Activated CD4-positive, alpha-beta T cell treated with anti-CD3 and anti-CD28 coated beads for 36 hours (primary cell): ENCODE measurements at regions of chr18 and their contacts with region 1.

Region 1: DNA sequence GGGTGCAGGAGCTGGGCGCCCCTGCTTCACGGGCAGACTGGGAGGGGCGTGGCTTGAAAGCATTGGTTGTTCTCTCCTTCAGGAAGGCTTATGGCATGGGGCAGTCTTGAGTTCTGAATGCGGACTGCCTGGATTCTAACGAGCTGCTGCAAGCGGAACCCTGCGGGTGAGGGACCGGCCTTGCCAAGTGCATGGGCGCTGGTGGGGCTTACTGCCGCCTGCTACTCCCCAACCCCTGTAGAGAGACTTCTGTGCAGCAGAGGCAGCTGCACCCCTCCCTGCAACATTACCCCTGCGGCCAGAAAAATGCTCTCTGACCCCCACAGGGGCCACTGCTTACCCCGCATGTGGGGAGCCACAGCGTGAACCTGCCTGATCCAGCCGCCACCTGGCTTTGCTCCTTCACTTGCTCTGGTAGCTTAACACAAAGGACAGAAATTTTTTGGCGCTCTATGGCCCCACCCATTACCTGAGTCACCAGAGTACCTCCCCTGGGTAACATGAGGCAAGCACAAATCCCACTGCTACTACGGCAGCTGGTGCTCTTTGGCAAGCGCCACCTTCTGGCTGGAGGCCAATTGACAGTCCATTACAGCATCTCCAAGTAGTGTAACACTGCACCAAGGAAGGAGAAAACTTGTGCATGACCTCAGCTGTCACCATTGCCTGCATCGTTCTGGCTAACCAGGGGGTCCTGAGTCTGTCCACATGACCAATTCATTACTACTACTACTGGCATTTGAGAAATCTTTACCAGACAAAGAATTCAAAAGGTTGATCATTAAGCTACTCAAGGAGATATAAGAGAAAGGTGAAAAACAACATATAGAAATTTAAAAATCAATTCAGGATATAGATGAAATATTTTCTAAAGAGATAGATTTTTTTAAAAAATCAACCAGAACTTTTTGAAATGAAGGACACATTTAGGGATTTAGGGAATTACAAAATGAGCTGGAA is 35.4 kb downstream of the MYL12B start:
- DNase-seq: peak; percentile 97
- ATAC-seq: peak; percentile 97
- H3K4me3 Mint-ChIP-seq: peak overlapping the region; percentile 87
- H3K27ac Mint-ChIP-seq: peak overlapping the region; percentile 78
- H3K4me1 Mint-ChIP-seq: peaks cover 2% of the 10 kb centered on the region
- H3K27me3 Mint-ChIP-seq: peaks cover 22% of the 10 kb centered on the region

Region 2: GRCh38 chr18:3261371-3262246 is 35.7 kb before region 1 on chr18 and contains the start of gene MYL12B:
- CTCF ChIA-PET with region 1: interaction called, 6 read pairs
- POLR2A ChIA-PET with region 1: interaction called, 5 read pairs
- intact Hi-C with region 1: loop called (anchors 1 to 2 kb)
- DNase-seq: peak; percentile 88
- ATAC-seq: peak; percentile 77
- H3K4me3 Mint-ChIP-seq: peak within 1 kb of the TSS; percentile 88
- H3K27ac Mint-ChIP-seq: peak within 1 kb of the TSS; percentile 96
- H3K4me1 Mint-ChIP-seq: peaks cover 59% of the 10 kb centered on the region
- H3K27me3 Mint-ChIP-seq: no peaks in the 10 kb centered on the region
- total RNA-seq, gene MYL12B: 282 to 301 TPM

Region 3: GRCh38 chr18:3269241-3269913 is 27.9 kb before region 1 on chr18:
- CTCF ChIA-PET with region 1: interaction called, 11 read pairs
- POLR2A ChIA-PET with region 1: no interaction called
- intact Hi-C with region 1: no loop called
- DNase-seq: no peak
- ATAC-seq: no peak
- H3K4me3 Mint-ChIP-seq: no peak overlapping the region
- H3K27ac Mint-ChIP-seq: peak overlapping the region; percentile 77
- H3K4me1 Mint-ChIP-seq: peaks cover 78% of the 10 kb centered on the region
- H3K27me3 Mint-ChIP-seq: no peaks in the 10 kb centered on the region

Region 4: DNA sequence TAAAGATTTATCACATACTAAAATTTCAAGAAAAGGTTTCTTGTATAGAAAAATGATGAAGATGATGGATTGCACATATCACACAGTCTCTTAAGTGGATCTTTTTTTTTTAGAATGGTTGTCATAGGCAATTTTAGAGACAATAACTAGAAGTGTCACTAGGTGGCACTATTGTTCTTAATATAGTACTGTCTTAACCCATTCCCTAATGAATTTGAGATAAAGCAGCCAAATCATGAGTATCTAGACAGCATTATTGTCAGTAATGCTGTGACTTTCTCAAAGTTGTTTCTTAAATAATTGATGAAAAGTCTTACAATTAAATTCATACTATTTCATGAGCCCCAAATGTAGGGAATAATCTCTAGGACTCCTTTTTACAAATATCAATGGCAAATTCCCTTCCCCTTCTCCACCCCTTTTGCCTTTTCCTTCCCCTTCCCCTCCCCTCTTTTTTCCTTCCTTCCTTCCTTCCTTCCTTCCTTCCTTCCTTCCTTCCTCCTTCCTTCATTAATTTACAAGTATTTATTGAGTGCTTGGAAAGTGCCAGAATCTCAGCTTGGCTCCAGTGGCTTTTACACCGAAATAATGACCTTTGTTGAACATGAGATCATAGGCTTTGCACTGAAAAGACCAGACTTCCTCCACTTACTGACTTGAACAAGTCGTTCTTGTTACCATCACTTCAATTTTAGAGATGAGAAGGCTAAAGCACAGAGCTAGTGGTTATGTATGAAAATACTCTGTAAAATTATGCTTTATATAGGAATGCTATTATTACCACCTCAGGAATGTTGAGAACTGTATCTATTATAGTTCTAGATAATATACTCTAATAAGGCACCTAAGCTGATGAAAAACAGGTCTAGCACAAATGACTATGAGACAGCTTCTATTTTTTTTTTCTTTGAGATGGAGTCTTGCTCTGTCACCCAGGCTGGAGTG is 15.6 kb before region 1 on chr18:
- CTCF ChIA-PET with region 1: interaction called, 17 read pairs
- POLR2A ChIA-PET with region 1: no interaction called
- intact Hi-C with region 1: no loop called
- DNase-seq: no peak
- ATAC-seq: peak; percentile 90
- H3K4me3 Mint-ChIP-seq: no peak overlapping the region
- H3K27ac Mint-ChIP-seq: no peak overlapping the region
- H3K4me1 Mint-ChIP-seq: peaks cover 10% of the 10 kb centered on the region
- H3K27me3 Mint-ChIP-seq: no peaks in the 10 kb centered on the region

Region 5: DNA sequence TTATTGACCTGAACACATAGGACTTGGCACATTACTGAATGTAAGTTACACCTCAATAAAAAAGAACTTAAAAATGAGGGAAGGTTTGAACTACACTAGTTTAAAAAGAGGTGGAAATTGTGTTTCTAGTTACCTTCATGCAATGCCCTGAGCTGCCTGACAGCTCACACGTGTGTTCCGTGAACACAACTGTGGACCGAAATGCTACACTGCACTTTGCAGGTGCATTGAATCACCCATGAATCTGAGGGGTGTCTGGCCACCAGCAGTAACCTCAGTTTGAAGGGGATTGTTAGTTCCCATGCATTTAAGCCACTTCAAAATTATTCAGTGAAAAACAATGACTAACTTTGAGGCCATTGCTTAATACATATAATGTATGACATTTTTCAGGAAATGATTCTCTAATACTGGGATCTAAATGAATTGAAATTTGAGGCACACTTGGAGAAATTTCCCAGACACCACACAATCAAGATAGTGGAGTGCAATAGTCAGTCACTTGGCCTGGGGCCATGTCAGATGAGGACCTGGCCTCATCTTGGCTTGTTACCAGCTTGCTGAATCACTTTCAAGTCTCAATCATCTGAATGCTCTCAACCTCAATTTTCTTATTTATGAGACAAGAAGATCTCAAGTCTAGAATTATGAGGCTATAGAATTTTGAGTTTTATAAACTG is 24.0 kb after region 1 on chr18:
- CTCF ChIA-PET with region 1: interaction called, 10 read pairs
- POLR2A ChIA-PET with region 1: interaction called, 3 read pairs
- intact Hi-C with region 1: no loop called
- DNase-seq: peak; percentile 54
- ATAC-seq: peak; percentile 38
- H3K4me3 Mint-ChIP-seq: no peak overlapping the region
- H3K27ac Mint-ChIP-seq: no peak overlapping the region
- H3K4me1 Mint-ChIP-seq: peaks cover 23% of the 10 kb centered on the region
- H3K27me3 Mint-ChIP-seq: peaks cover 9% of the 10 kb centered on the region

Region 6: GRCh38 chr18:3380384-3380961 is 83.2 kb after region 1 on chr18:
- CTCF ChIA-PET with region 1: interaction called, 5 read pairs
- POLR2A ChIA-PET with region 1: no interaction called
- intact Hi-C with region 1: loop called in 1 of 2 experiments (anchors 2 kb)
- DNase-seq: peak; percentile 49
- ATAC-seq: peak; percentile 97
- H3K4me3 Mint-ChIP-seq: no peak overlapping the region
- H3K27ac Mint-ChIP-seq: no peak overlapping the region
- H3K4me1 Mint-ChIP-seq: peaks cover 10% of the 10 kb centered on the region
- H3K27me3 Mint-ChIP-seq: peaks cover 10% of the 10 kb centered on the region

Region 7: DNA sequence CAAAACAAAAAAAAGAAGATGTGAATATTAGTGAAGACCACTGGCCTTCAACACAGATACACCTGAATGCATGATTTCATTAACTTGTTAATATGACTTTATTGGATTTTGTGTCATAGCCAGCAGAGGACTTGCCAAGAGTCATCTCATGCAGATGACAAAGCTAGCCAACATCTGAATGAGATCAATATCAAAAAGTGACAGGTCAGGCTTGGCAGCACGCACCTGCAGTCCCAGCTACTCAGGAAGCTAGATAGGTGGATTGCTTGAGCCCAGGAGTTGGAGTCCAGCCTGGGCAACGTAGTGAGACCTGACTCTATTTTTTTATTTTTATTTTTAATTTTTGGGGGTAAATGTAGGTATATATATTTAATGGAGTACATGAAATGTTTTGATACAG is 98.2 kb after region 1 on chr18:
- CTCF ChIA-PET with region 1: no interaction called
- POLR2A ChIA-PET with region 1: no interaction called
- intact Hi-C with region 1: no loop called
- DNase-seq: no peak
- ATAC-seq: no peak
- H3K4me3 Mint-ChIP-seq: no peak overlapping the region
- H3K27ac Mint-ChIP-seq: no peak overlapping the region
- H3K4me1 Mint-ChIP-seq: no peaks in the 10 kb centered on the region
- H3K27me3 Mint-ChIP-seq: no peaks in the 10 kb centered on the region